Calu3 (cell line): ENCODE measurements at regions of chr18 and their contacts with region 1.

Region 1: DNA sequence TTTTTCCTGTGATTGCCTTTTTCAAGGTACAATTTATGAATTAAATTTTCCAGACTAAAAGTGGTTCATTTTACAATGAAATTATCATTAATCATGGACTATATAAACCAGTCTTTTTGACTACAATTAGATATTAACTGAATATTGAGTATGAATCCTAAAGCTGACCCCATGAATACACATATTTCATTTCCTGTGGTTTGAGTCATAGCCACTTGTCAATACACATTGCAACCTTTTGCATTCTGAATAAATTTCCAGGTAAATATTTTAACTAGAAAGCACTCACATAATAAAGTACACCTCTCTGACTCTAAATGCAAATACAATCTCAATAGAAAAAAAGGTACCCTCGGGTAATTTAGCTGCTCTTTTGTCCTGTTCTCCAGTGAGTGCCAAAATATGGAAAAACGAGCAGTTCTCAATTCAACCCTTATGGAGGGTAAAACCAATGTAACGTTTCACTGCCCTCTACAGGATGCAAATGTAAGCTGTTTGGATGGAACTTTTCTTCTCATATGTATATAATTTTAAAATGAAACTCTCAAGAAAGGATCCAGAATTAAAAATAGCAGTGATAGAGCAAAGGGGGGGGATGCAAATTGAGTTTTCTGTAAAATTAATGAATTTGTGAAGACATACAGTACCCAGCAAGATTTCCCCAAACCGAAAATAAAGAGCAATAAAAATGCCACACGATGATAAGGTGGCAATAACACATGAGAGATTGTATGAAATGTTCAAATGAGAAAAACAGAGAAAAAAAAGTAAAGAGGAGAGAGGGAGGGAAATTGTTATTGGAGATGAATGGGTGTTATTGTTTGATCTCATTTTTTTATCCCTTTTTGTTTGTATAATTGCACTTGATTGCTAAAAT is 1795.7 kb upstream of the PIK3C3 start:
- DNase-seq: peak; percentile 24
- H3K4me3 Mint-ChIP-seq: peak overlapping the region; percentile 27
- H3K27ac Mint-ChIP-seq: peak overlapping the region; percentile 19
- H3K4me1 Mint-ChIP-seq: peaks cover 24% of the 10 kb centered on the region
- H3K27me3 Mint-ChIP-seq: no peaks in the 10 kb centered on the region
- CTCF ChIP-seq: peak; percentile 67

Region 2: GRCh38 chr18:39596891-39597290 is 562.5 kb before region 1 on chr18:
- CTCF ChIA-PET with region 1: no interaction called
- intact Hi-C with region 1: loop called (anchors 10 kb)
- DNase-seq: no peak
- H3K4me3 Mint-ChIP-seq: no peak overlapping the region
- H3K27ac Mint-ChIP-seq: no peak overlapping the region
- H3K4me1 Mint-ChIP-seq: peaks cover 48% of the 10 kb centered on the region
- H3K27me3 Mint-ChIP-seq: no peaks in the 10 kb centered on the region
- CTCF ChIP-seq: no peak

Region 3: GRCh38 chr18:39841482-39842365 is 317.7 kb before region 1 on chr18:
- CTCF ChIA-PET with region 1: interaction called, 6 read pairs
- intact Hi-C with region 1: loop called (anchors 5 kb)
- DNase-seq: peak; percentile 74
- H3K4me3 Mint-ChIP-seq: peak overlapping the region; percentile 87
- H3K27ac Mint-ChIP-seq: no peak overlapping the region
- H3K4me1 Mint-ChIP-seq: peaks cover 12% of the 10 kb centered on the region
- H3K27me3 Mint-ChIP-seq: no peaks in the 10 kb centered on the region
- CTCF ChIP-seq: peak; percentile 54

Region 4: GRCh38 chr18:39862341-39862740 is 297.0 kb before region 1 on chr18:
- CTCF ChIA-PET with region 1: no interaction called
- intact Hi-C with region 1: no loop called
- DNase-seq: no peak
- H3K4me3 Mint-ChIP-seq: no peak overlapping the region
- H3K27ac Mint-ChIP-seq: no peak overlapping the region
- H3K4me1 Mint-ChIP-seq: no peaks in the 10 kb centered on the region
- H3K27me3 Mint-ChIP-seq: no peaks in the 10 kb centered on the region
- CTCF ChIP-seq: no peak

Region 5: GRCh38 chr18:39946623-39947061 is 212.7 kb before region 1 on chr18:
- CTCF ChIA-PET with region 1: no interaction called
- intact Hi-C with region 1: loop called (anchors 10 kb)
- DNase-seq: peak; percentile 64
- H3K4me3 Mint-ChIP-seq: no peak overlapping the region
- H3K27ac Mint-ChIP-seq: peak overlapping the region; percentile 63
- H3K4me1 Mint-ChIP-seq: peaks cover 45% of the 10 kb centered on the region
- H3K27me3 Mint-ChIP-seq: no peaks in the 10 kb centered on the region
- CTCF ChIP-seq: no peak

Region 6: GRCh38 chr18:40013001-40013609 is 146.3 kb before region 1 on chr18:
- CTCF ChIA-PET with region 1: no interaction called
- intact Hi-C with region 1: loop called (anchors 10 kb)
- DNase-seq: no peak
- H3K4me3 Mint-ChIP-seq: no peak overlapping the region
- H3K27ac Mint-ChIP-seq: no peak overlapping the region
- H3K4me1 Mint-ChIP-seq: peaks cover 26% of the 10 kb centered on the region
- H3K27me3 Mint-ChIP-seq: no peaks in the 10 kb centered on the region
- CTCF ChIP-seq: no peak

Region 7: GRCh38 chr18:40292985-40293710 is 133.8 kb after region 1 on chr18:
- CTCF ChIA-PET with region 1: no interaction called
- intact Hi-C with region 1: loop called (anchors 5 kb)
- DNase-seq: peak; percentile 8
- H3K4me3 Mint-ChIP-seq: no peak overlapping the region
- H3K27ac Mint-ChIP-seq: no peak overlapping the region
- H3K4me1 Mint-ChIP-seq: peaks cover 8% of the 10 kb centered on the region
- H3K27me3 Mint-ChIP-seq: no peaks in the 10 kb centered on the region
- CTCF ChIP-seq: no peak